ENCODE measurements at regions of chr3 and their contacts with region 1.

Region 1: DNA sequence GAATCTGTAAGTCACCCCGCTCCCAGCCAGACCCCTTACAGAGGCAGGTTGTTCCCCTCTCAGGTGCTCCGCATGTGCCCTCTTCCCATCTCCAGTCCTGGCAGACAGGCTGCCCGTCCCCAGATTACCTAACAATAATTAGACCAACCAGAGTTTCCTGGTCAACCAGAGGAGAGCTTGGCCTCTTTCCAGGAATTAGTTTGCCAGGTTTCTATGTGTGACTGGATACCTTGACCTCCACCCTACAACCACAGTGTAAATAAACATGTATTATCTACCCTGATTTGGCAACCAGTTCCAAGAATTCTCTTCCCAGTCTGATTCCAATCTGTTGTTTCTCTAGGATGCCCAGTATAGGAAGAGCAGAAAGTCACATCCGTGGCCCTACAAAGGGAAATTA is 178.0 kb upstream of the UMPS start:
- DNase-seq: no peak
- H3K4me3 Mint-ChIP-seq: no peak overlapping the region
- H3K27ac Mint-ChIP-seq: no peak overlapping the region
- H3K4me1 Mint-ChIP-seq: peaks cover 4% of the 10 kb centered on the region
- H3K27me3 Mint-ChIP-seq: peaks cover 43% of the 10 kb centered on the region

Region 2: DNA sequence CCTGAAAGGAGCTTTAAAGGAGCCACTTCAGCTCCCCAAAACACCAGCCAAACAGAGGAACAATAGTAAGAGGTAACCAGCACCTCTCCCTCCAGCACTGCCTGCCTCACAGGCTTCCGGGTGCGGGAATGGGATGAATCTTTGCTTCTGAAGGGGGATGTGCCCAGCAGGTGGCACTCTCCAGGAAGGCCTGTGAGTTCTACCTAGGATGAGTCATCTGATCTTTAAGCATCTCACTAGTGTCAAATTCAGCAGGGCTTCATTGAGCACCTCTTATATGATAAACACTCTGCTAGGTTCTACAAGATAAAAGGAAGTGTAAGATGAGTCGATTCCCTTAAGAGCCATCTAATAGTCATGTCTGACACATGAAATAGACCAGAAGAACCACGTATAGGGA is 59.4 kb before region 1 on chr3:
- intact Hi-C with region 1: loop called (anchors 5 kb)
- DNase-seq: no peak
- H3K4me3 Mint-ChIP-seq: no peak overlapping the region
- H3K27ac Mint-ChIP-seq: no peak overlapping the region
- H3K4me1 Mint-ChIP-seq: peaks cover 6% of the 10 kb centered on the region
- H3K27me3 Mint-ChIP-seq: peaks cover 14% of the 10 kb centered on the region